ENCODE measurements at regions of chr6 and their contacts with region 1.

Region 1: GRCh38 chr6:12289933-12290820 is at the start of gene EDN1:
- DNase-seq: peak; percentile 51
- ATAC-seq: peak; percentile 84
- H3K4me3 ChIP-seq: peak within 1 kb of the TSS; percentile 88
- H3K27ac ChIP-seq: peak within 1 kb of the TSS; percentile 54
- H3K4me1 ChIP-seq: peaks cover 8% of the 10 kb centered on the region
- H3K27me3 ChIP-seq: no peaks in the 10 kb centered on the region
- CTCF ChIP-seq: peak; percentile 51 to 66 (median 55)
- EP300 ChIP-seq: no peak; a peak in 1 of 4 replicates
- POLR2A ChIP-seq: peak; percentile 57; the same call in 1 of the 2 replicates
- RAD21 ChIP-seq: peak; percentile 50
- polyA plus RNA-seq, gene EDN1: 2.0 to 2.5 TPM

Region 2: DNA sequence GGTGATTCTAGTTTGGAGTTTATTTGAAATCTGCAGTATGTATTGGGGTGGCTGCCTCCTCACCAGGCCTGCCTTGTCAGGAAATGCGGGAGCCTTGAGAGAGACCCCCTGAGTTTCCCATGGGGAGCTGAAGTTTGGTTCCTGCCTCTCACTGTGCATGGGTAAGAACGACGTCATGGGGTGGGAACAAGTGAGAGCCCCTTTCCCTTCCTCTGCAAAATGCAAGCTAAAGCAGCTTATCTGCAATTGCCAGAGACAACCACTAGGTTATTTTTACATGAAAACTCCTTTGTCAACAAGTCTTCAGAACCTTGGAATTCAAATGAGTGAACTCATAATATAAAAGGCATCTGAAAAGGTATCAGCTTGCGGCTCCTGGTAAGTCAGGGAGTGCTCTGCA is 694.3 kb before region 1 on chr6:
- CTCF ChIA-PET with region 1: interaction called, 8 read pairs
- POLR2A ChIA-PET with region 1: interaction called, 4 read pairs
- RAD21 ChIA-PET with region 1: interaction called, 10 read pairs
- SMC1A ChIA-PET with region 1: interaction called, 7 read pairs
- in situ Hi-C with region 1: no loop called
- intact Hi-C with region 1: no loop called
- DNase-seq: no peak
- ATAC-seq: peak; percentile 37; the same call in 2 of the 3 replicates
- H3K4me3 ChIP-seq: no peak overlapping the region
- H3K27ac ChIP-seq: no peak overlapping the region
- H3K4me1 ChIP-seq: no peaks in the 10 kb centered on the region
- H3K27me3 ChIP-seq: 0 out of 4 replicates have a peak, but pooled peaks cover 0 to 2% of the 10 kb centered on the region in 2 experiments
- CTCF ChIP-seq: peak in 2 of 3 experiments; percentile 20; a peak in 2 of 6 replicates
- EP300 ChIP-seq: no peak
- POLR2A ChIP-seq: no peak
- RAD21 ChIP-seq: no peak

Region 3: GRCh38 chr6:11700118-11700718 is 590.0 kb before region 1 on chr6:
- CTCF ChIA-PET with region 1: interaction called, 12 read pairs
- POLR2A ChIA-PET with region 1: no interaction called
- RAD21 ChIA-PET with region 1: interaction called, 7 read pairs
- SMC1A ChIA-PET with region 1: interaction called, 7 read pairs
- in situ Hi-C with region 1: no loop called
- intact Hi-C with region 1: no loop called
- DNase-seq: no peak
- ATAC-seq: peak; percentile 70
- H3K4me3 ChIP-seq: no peak overlapping the region
- H3K27ac ChIP-seq: no peak overlapping the region
- H3K4me1 ChIP-seq: peaks cover 4% of the 10 kb centered on the region
- H3K27me3 ChIP-seq: no peaks in the 10 kb centered on the region
- CTCF ChIP-seq: peak; percentile 35 to 50 (median 35); a peak in 3 of 6 replicates
- EP300 ChIP-seq: no peak
- POLR2A ChIP-seq: no peak
- RAD21 ChIP-seq: peak; percentile 82

Region 4: GRCh38 chr6:12060780-12061619 is 229.2 kb before region 1 on chr6:
- CTCF ChIA-PET with region 1: interaction called, 10 read pairs
- POLR2A ChIA-PET with region 1: interaction called, 6 read pairs
- RAD21 ChIA-PET with region 1: interaction called, 11 read pairs
- SMC1A ChIA-PET with region 1: interaction called, 9 read pairs
- in situ Hi-C with region 1: no loop called
- intact Hi-C with region 1: no loop called
- DNase-seq: peak; percentile 87
- ATAC-seq: peak; percentile 82
- H3K4me3 ChIP-seq: peak overlapping the region; percentile 57; the same call in 1 of the 2 replicates
- H3K27ac ChIP-seq: peak overlapping the region; percentile 85
- H3K4me1 ChIP-seq: peaks cover 44% of the 10 kb centered on the region
- H3K27me3 ChIP-seq: no peaks in the 10 kb centered on the region
- CTCF ChIP-seq: no peak
- EP300 ChIP-seq: peak; percentile 94
- POLR2A ChIP-seq: peak; percentile 70
- RAD21 ChIP-seq: no peak

Region 5: DNA sequence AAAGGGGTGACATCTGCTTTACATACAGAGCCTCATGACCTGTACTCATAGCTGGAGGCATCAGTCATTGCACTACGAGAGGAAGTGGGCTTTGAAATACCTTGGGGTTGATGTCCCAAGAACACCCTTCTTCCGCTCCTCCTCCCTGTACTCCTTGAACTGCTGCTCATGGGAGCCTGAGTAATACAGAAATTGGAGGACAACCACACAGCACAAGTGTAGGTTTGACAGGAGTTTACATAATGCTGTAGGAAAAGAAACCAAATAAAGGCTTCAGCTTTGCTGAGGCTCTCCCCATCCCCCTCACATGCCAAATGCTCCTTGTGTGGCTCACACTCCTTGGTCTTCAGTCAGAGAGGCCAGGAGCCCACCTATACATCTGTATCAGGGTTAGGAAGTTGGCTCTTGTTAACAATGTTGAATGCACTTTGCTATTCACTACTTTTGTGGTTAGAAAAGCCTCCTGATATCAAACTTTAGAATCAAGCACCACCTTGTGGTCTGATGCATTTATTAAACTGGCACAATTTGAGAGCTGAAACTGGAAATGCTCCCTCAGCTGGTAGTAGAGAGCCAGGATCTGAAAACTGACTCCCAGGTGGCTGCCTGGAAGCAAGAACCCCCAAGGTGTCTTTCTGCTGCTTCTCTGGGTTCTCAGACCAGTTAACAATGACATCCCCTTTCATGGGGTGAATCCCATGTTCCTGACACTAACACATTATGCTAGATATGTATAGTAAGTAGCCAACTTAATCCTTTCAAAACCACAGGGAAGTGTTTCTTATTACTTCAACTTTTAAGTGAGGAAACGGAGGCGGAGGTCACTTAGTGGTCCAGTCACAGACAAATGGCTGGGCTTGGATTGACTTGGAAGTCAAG is 56.2 kb before region 1 on chr6:
- CTCF ChIA-PET with region 1: interaction called, 19 read pairs
- POLR2A ChIA-PET with region 1: no interaction called
- RAD21 ChIA-PET with region 1: interaction called, 8 read pairs
- SMC1A ChIA-PET with region 1: interaction called, 24 read pairs
- in situ Hi-C with region 1: no loop called
- intact Hi-C with region 1: no loop called
- DNase-seq: peak; percentile 66
- ATAC-seq: peak; percentile 89
- H3K4me3 ChIP-seq: no peak overlapping the region
- H3K27ac ChIP-seq: peak overlapping the region; percentile 65
- H3K4me1 ChIP-seq: peaks cover 22% of the 10 kb centered on the region
- H3K27me3 ChIP-seq: no peaks in the 10 kb centered on the region
- CTCF ChIP-seq: peak; percentile 46 to 64 (median 54); a peak in 5 of 6 replicates
- EP300 ChIP-seq: no peak
- POLR2A ChIP-seq: no peak
- RAD21 ChIP-seq: peak; percentile 73

Region 6: GRCh38 chr6:12369781-12370262 is 79.6 kb after region 1 on chr6:
- CTCF ChIA-PET with region 1: interaction called, 56 read pairs
- POLR2A ChIA-PET with region 1: interaction called, 5 read pairs
- RAD21 ChIA-PET with region 1: interaction called, 92 read pairs
- SMC1A ChIA-PET with region 1: interaction called, 119 read pairs
- in situ Hi-C with region 1: no loop called
- intact Hi-C with region 1: no loop called
- DNase-seq: peak; percentile 73
- ATAC-seq: peak; percentile 92
- H3K4me3 ChIP-seq: no peak overlapping the region
- H3K27ac ChIP-seq: peak overlapping the region; percentile 35
- H3K4me1 ChIP-seq: peaks cover 13% of the 10 kb centered on the region
- H3K27me3 ChIP-seq: no peaks in the 10 kb centered on the region
- CTCF ChIP-seq: peak; percentile 25 to 41 (median 30); a peak in 4 of 6 replicates
- EP300 ChIP-seq: peak; percentile 55 to 78; a peak in 2 of 4 replicates
- POLR2A ChIP-seq: no peak
- RAD21 ChIP-seq: peak; percentile 62

Region 7: GRCh38 chr6:12605888-12606345 is 315.7 kb after region 1 on chr6:
- CTCF ChIA-PET with region 1: interaction called, 403 read pairs
- POLR2A ChIA-PET with region 1: interaction called, 27 read pairs
- RAD21 ChIA-PET with region 1: interaction called, 384 read pairs
- SMC1A ChIA-PET with region 1: interaction called, 382 read pairs
- in situ Hi-C with region 1: no loop called
- intact Hi-C with region 1: loop called (anchors 1 kb)
- DNase-seq: peak; percentile 90
- ATAC-seq: peak; percentile 66
- H3K4me3 ChIP-seq: 0 out of 2 replicates have a peak overlapping the region, but pooled peaks have one; percentile 28
- H3K27ac ChIP-seq: peak overlapping the region; percentile 41
- H3K4me1 ChIP-seq: peaks cover 46% of the 10 kb centered on the region
- H3K27me3 ChIP-seq: no peaks in the 10 kb centered on the region
- CTCF ChIP-seq: peak; percentile 70 to 87 (median 80); a peak in 5 of 6 replicates
- EP300 ChIP-seq: peak in 1 of 2 experiments; percentile 64; a peak in 2 of 4 replicates
- POLR2A ChIP-seq: no peak
- RAD21 ChIP-seq: peak; percentile 80

Measured in GM12878 (cell line).